ENCODE measurements at regions of chrX and their contacts with region 1.

Region 1: GRCh38 chrX:103214870-103215424 is at the start of gene BEX4:
- DNase-seq: peak; percentile 84 to 85
- H3K4me3 ChIP-seq: peak within 1 kb of the TSS; percentile 63 to 84 (median 73)
- H3K27ac ChIP-seq: peak within 1 kb of the TSS; percentile 90 to 96
- H3K4me1 ChIP-seq: no peaks in the 10 kb centered on the region
- H3K27me3 ChIP-seq: peaks cover 0 to 44% of the 10 kb centered on the region in 2 donors
- CTCF ChIP-seq: no peak
- POLR2A ChIP-seq: peak; percentile 78
- total RNA-seq, gene BEX4: 21.9 to 44.2 (median 41.9) TPM

Region 2: GRCh38 chrX:101390664-101391525 is 1824.1 kb before region 1 on chrX and contains the start of gene RPL36A:
- intact Hi-C with region 1: loop called (anchors 5 kb)
- DNase-seq: peak; percentile 78 to 81
- H3K4me3 ChIP-seq: peak within 1 kb of the TSS; percentile 47 to 72 (median 57)
- H3K27ac ChIP-seq: peak within 1 kb of the TSS; percentile 81 to 84
- H3K4me1 ChIP-seq: no peaks in the 10 kb centered on the region
- H3K27me3 ChIP-seq: peaks cover 0 to 30% of the 10 kb centered on the region in 2 donors
- CTCF ChIP-seq: peak in 2 of 3 donors; percentile 44 to 55
- POLR2A ChIP-seq: peak; percentile 43
- total RNA-seq, gene RPL36A: 503 to 954 (median 526) TPM

Region 3: GRCh38 chrX:103382877-103383276 is 167.9 kb after region 1 on chrX:
- intact Hi-C with region 1: no loop called
- DNase-seq: no peak
- H3K4me3 ChIP-seq: no peak overlapping the region
- H3K27ac ChIP-seq: no peak overlapping the region
- H3K4me1 ChIP-seq: no peaks in the 10 kb centered on the region
- H3K27me3 ChIP-seq: peaks cover 0 to 24% of the 10 kb centered on the region in 2 donors
- CTCF ChIP-seq: no peak
- POLR2A ChIP-seq: no peak

Measured in breast epithelium (tissue), 4 donors.